BJ (cell line): ENCODE measurements at regions of chr15 and their contacts with region 1.

Region 1: GRCh38 chr15:59725172-59725486 is 36.0 kb upstream of the BNIP2 start:
- DNase-seq: no peak
- H3K4me3 ChIP-seq: no peak overlapping the region
- H3K27me3 ChIP-seq: peaks cover 5% of the 10 kb centered on the region
- CTCF ChIP-seq: no peak

Region 2: GRCh38 chr15:59688841-59689625 is 36.1 kb before region 1 on chr15 and contains the start of gene BNIP2:
- CTCF ChIA-PET with region 1: interaction called, 17 read pairs
- POLR2A ChIA-PET with region 1: no interaction called
- DNase-seq: peak; percentile 91
- H3K4me3 ChIP-seq: peak within 1 kb of the TSS; percentile 100
- H3K27me3 ChIP-seq: no peaks in the 10 kb centered on the region
- CTCF ChIP-seq: no peak; the same call in 1 of the 2 replicates
- polyA plus RNA-seq, gene BNIP2: 25.3 and 38.9 TPM in 2 replicates

Region 3: DNA sequence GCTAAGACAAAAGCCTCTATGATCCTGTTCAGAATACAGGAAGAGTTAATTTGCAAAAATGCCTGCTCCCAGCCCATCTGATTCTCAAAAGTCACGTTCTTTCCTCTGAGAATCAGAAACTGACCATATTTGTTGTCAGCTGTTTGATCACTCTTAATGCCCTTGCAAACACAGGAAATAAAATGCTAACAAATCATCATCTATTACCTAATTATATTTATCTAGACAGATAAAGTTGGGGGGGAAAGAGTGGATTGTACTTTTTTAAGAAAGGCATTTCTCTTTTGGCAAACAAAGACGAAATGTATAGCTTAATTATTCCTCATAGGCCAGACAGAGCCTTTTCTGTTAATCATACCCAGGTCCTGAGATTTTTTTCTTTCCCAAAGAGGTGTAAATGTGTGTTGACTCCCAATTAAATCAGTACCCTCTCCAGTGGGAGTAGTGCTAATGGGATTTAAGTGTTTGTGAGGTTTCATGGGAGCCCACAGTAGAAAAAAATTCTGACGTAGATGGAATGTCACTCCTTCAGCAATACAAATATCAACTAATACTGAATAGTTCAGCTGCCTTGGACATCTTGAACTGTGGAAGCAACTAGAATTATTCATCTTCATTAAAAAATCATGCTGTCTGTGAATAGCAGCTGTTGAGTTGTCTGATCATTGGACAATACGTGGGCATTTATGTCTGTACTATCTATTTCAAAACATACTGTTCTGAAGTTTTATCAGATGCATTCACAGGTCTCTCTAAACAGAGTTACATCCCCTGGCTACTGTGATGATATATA is 13.5 kb before region 1 on chr15:
- CTCF ChIA-PET with region 1: interaction called, 21 read pairs
- POLR2A ChIA-PET with region 1: no interaction called
- DNase-seq: no peak
- H3K4me3 ChIP-seq: no peak overlapping the region
- H3K27me3 ChIP-seq: 0 out of 2 replicates have a peak, but pooled peaks cover 1% of the 10 kb centered on the region
- CTCF ChIP-seq: no peak